Right ventricle myocardium inferior (tissue), 1 donor: ENCODE measurements at regions of chr12 and their contacts with region 1.

Region 1: DNA sequence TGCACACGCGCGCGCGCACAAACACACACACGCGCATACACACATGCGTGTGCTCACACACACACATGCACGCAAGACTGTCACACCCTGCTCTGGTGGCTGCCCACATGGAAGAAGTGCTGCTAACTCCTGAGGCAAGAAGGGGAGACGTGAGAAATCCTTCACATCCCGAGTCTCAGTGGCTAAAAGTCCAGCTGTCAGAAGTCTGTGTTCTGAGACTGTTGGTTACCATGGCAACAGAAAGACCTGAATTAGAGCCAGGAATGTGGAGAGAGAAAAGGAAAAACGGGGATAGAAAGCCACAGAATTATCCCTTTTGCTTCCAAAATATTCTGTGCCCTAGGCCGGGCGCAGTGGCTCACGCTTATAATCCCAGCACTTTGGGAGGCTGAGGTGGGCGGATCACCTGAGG is 71.2 kb downstream of the PPFIBP1 start:
- DNase-seq: peak; percentile 69
- ATAC-seq: peak; percentile 73

Region 2: DNA sequence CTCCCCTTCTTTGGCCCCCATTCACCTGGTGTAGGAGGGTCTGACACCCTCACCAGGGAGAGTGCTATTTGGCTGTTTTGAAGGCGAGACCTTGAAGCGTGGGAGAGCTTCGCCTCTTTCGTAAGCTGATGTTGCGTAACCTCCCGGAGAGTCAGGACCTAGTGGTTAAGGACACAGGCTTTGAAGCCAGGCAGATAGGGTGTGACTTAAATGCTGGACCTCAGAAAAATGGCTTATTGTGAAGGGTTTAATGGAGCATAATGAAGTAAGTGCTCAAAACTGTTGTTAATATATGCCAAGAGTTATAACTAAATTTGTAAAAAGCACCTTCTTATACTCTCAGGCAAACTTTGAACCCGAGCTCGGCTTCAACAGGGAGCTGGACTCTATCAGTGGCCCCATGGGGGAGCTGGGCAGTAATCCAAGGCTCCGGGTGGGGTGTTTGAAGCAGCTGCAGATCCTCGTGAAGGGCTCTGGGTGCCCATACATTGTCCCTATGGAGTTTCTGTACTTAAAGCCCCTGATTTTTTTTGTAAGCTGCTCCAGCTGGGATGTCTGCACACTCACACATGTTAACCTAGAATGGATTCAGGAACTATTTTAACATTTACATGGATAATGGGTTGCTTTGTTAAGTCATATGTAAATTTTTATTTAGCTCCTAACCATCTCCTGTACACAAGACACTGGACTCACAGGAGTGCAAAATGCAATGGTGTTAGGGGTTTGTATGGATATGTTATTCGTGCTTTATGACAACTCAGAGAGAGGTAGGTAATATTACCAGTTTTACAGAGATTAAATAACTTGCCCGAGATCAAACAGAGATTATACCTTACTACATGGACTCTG is 45.2 kb before region 1 on chr12:
- intact Hi-C with region 1: loop called (anchors 5 kb)
- DNase-seq: peak; percentile 85
- ATAC-seq: peak; percentile 88

Region 3: DNA sequence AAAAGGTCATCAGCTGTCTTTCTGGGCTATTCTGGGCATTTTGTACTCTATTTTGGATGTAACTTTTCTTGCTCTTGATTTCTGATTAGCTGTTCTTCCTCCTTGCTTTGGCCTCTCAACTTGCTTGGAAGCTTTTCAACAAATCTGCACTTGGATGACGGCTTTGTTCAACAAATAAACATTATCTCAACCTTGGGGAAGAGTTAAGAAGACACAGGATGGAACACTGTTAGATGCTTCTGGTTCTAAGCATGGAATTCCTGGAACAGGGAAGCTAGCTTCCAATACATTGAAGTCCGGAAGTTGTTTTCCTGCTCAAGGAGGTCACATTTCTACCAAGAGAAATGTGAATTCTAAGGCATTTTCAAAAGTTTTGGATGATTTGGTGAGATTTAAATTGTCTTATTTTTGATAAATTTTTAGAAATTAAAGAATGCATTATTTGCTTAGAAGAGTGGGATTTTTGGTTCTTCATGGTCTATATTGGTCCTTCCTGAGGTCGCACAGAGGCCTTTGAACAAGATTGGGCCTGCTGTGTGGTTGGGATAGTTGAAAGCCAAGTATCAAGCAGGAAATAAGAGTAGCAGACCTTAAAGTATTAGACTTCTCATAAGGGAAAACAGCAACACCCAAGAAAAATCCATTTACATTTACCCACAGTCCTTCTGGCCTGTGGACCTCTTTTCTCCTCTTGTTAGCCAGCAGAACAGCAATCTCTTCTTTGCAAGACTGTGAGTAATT is 12.0 kb before region 1 on chr12:
- intact Hi-C with region 1: loop called (anchors 2 kb)
- DNase-seq: no peak
- ATAC-seq: peak; percentile 73

Region 4: GRCh38 chr12:27627123-27627835 is 32.0 kb after region 1 on chr12:
- intact Hi-C with region 1: loop called (anchors 5 kb)
- DNase-seq: no peak
- ATAC-seq: peak; percentile 44